Tibial artery (tissue), 4 donors: ENCODE measurements at regions of chr15 and their contacts with region 1.

Region 1: GRCh38 chr15:83571820-83572707 is 81.9 kb upstream of the ADAMTSL3 start:
- DNase-seq: no peak
- H3K4me3 ChIP-seq: no peak overlapping the region
- H3K27ac ChIP-seq: no peak overlapping the region
- H3K4me1 ChIP-seq: no peaks in the 10 kb centered on the region
- H3K27me3 ChIP-seq: no peaks in the 10 kb centered on the region
- CTCF ChIP-seq: peak; percentile 44 to 69

Region 2: DNA sequence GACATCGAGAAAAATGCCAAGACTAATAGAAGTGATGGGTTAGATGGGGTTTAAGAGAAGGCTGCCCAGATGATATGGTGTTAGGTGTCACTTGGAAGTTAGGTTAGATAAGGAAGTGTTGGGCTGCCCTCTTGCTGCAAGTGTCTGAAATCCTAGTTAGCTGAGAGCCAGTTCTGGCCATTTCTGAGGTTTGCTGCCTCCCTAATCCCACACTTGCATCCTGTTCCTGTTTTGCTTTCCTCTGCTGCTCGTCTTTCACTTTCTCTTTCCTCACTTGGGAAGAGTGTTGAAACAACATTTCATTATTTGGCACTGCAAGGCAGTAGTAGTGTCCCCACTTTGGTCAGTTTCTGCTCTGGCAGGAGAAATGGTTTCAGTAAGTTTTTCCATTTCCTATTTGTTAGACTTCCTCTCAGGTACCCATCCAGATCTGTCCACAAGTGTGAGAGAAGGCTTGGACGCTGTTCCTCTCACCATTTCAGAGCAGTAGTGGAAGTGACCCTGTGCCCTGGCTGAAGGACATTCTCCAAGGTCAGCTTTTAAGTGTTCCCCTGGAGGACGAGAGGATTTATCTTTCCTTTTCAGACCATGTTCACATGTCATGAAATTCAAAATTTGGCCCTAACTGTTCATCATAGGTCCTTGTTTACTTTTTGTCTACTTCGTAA is 175.1 kb after region 1 on chr15:
- intact Hi-C with region 1: loop called (anchors 5 kb)
- DNase-seq: peak; percentile 62 to 73
- H3K4me3 ChIP-seq: peak overlapping the region; percentile 30 to 39
- H3K27ac ChIP-seq: peak overlapping the region; percentile 76 to 77
- H3K4me1 ChIP-seq: peaks cover 0 to 21% (median 6%) of the 10 kb centered on the region in 4 donors
- H3K27me3 ChIP-seq: no peaks in the 10 kb centered on the region
- CTCF ChIP-seq: peak; percentile 47 to 55

Region 3: DNA sequence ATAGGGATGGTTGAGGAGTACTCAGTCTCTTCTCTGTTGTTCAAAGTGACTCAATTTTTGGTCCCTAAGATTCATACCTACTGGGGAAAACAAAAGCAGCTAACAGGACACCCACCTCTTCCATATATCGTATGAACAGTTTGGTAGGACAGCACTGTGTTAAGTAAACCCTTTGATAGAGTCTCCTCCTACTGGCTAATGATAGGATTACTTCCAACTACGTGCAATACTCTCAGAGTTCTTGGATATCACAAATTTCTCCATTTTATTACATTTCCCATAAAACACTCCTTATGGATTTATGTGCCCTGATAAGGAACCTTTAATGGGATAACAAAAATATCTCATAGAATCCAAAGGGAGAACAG is 463.3 kb after region 1 on chr15:
- intact Hi-C with region 1: loop called (anchors 10 kb)
- DNase-seq: no peak
- H3K4me3 ChIP-seq: no peak overlapping the region
- H3K27ac ChIP-seq: no peak overlapping the region
- H3K4me1 ChIP-seq: peaks cover 0 to 4% (median 0%) of the 10 kb centered on the region in 4 donors
- H3K27me3 ChIP-seq: no peaks in the 10 kb centered on the region
- CTCF ChIP-seq: peak; percentile 37 to 47